ENCODE measurements at regions of chr12 and their contacts with region 1.

Region 1: DNA sequence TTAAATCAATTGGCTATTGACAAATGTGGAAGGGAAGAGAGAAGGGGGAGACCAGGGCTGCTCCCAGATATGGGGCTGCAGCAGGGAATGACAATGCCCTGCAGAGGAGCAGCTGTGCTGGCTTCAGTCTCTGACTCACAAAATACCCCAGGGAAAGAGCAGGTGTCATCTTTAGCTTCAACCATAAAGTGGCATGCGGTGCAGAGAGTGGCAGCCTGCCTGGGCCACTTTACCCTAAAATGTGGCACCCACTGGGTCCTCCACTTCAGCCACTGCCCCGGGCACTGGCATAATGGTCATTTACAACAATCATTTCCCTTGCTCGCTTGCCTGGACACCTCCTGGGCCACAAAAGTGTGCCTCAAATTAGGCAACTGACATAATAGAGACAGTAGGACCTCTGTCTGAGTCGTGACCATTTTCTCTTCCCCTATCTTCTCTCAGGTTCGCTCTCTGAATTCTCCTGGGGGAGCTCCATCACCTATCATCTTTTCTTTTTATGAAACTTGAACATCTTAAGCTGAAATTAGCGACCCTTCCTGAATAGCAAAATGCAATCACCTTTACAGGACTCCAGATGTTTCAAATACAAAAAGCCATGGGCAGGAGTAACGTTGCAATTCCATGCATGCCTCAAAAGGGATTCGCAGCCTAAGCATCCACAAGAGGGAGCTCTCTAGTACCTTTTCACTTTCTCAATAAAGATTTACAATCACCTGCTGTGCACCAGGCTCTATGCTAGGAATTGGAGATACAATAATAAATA is 179.9 kb upstream of the ATF7IP start:
- DNase-seq: peak; percentile 37
- H3K4me3 ChIP-seq: no peak overlapping the region
- H3K27ac ChIP-seq: no peak overlapping the region
- H3K4me1 ChIP-seq: no peaks in the 10 kb centered on the region
- H3K27me3 ChIP-seq: no peaks in the 10 kb centered on the region
- CTCF ChIP-seq: peak; percentile 69 to 80

Region 2: DNA sequence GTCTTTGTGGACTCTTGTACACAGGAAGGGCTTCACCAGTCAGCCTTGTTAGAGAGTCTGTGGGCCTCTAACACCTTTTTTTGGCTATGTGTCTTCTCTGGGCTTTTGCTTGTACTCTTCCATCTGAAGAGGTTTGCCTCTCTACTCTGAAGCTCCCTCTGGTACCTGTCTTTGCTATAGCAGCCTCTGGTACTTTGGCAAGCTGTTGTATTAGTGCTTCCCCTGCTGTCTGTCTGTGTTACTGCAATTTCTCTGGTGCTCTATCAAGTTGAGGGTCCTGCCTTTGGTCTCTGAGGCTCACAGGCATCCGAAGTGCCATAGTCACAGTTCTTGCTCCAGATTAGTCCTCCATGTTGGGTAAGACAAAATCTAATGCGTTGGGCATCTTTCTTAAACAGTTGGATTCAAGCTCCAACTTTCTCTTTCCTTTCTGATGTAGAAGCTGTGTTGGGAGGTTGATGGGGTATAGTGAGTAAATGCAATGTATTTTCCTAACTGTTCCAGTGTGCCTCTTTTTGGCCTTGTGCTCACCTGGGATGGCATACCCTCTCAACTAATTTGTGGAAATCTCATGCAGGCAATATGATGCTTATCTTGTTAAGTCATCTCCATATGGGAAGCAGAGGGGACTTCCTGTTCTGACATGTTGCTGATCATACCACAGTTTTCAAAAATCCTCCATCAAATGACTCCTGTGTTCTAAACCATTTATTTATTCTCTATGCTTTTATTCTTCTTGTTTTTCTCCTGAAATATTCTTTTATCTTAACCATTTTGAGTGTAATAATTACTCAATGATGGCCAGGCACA is 268.7 kb after region 1 on chr12:
- CTCF ChIA-PET with region 1: no interaction called
- dilution Hi-C with region 1: no loop called
- in situ Hi-C with region 1: no loop called
- intact Hi-C with region 1: loop called (anchors 1 kb)
- DNase-seq: peak; percentile 44
- H3K4me3 ChIP-seq: no peak overlapping the region
- H3K27ac ChIP-seq: no peak overlapping the region
- H3K4me1 ChIP-seq: no peaks in the 10 kb centered on the region
- H3K27me3 ChIP-seq: no peaks in the 10 kb centered on the region
- CTCF ChIP-seq: peak; percentile 75 to 77

Region 3: DNA sequence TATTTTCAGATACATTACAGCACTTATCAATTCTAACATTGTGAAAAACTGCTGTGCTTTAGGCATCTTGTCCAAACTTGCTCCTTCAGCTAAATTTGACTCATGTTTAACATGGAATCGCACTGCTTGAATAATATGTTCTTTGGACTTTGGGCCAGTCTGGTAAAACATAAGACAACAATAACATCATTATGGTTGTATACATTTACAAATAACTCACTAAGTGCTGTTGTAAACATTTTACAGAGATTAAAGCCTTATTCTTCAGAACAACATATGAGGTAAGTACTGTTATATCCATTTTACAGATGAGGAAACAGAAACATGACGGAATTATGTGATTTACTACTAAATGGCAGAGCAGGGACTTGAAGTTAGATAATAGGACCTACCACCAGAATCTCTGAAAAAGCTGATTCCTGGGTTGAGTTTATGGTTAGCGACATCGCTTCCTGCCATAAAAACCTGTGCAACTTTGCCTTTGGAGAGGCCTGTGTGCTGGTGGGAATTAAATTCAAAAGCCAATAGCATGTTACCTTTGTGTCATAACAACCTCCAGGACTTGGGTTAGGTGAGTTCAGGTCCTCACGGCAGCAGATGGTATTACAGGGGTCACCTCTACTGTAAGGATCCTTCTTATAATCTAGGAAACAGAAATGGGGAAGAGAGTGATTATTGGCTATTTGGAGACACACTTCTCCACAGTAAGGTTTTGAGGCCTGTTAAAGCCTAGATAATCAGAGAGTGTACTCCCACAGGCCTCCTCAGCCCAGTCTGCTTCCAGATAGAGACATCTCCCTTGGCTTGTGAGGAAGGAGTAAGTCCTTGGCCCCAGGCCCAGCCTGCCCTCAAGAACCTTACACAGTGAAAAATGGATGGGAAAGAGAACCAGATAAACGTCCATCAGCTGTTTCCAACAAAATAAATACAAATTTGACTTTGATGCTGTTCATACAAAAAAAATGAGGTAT is 320.3 kb after region 1 on chr12:
- CTCF ChIA-PET with region 1: no interaction called
- dilution Hi-C with region 1: no loop called
- in situ Hi-C with region 1: no loop called
- intact Hi-C with region 1: no loop called
- DNase-seq: no peak
- H3K4me3 ChIP-seq: no peak overlapping the region
- H3K27ac ChIP-seq: no peak overlapping the region
- H3K4me1 ChIP-seq: no peaks in the 10 kb centered on the region
- H3K27me3 ChIP-seq: no peaks in the 10 kb centered on the region
- CTCF ChIP-seq: no peak

Measured in mammary epithelial cell (primary cell).